ENCODE measurements at regions of chr13 and their contacts with region 1.

Region 1: DNA sequence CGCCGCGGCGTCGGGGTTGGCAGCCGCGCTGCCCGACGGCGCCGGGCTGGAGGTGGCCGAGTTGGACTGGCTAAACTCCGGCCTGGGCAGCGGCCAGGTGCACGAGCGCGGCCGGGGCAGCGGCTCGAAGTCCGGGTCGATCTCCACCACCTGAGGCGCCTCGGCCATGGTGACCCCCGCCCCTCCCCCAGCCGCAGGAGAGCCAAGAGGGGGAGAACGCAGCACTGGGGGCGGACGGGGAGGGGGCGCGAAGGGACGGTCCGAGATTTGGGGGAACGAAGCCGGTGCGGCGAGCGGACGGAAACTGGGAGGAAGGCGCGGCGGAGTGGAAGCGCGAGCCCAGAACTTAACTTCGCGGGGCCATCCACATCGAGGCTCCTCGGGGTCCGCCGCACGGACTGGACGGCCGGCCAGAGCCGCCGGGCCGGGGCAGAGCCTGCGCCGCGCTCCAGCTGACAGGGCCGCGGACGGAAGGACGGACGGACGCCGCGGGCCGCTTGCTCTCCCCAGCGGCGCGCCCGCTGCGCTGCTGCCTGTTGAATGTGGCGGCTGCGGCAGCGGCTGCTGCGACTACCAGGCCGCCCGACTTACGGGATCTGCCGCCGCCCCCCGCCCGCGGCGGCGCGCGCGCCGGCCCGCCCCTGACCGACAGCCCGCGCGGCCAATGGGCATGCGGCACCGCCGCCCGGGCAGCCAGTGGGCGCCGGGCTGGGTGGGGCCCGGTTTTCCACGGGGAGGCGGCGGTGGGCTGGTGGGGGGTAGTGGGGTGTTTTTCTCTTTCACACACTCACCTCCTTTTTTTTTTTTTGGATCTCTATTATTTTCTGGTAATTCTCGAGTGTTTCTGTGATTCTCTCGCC is at the start of gene FOXO1:
- DNase-seq: peak; percentile 93
- H3K4me3 ChIP-seq: peak within 1 kb of the TSS; percentile 91
- H3K27ac ChIP-seq: peak within 1 kb of the TSS; percentile 83
- H3K4me1 ChIP-seq: peaks cover 39% of the 10 kb centered on the region
- CTCF ChIP-seq: no peak
- total RNA-seq, gene FOXO1: 24.0 and 29.2 TPM in 2 replicates

Region 2: DNA sequence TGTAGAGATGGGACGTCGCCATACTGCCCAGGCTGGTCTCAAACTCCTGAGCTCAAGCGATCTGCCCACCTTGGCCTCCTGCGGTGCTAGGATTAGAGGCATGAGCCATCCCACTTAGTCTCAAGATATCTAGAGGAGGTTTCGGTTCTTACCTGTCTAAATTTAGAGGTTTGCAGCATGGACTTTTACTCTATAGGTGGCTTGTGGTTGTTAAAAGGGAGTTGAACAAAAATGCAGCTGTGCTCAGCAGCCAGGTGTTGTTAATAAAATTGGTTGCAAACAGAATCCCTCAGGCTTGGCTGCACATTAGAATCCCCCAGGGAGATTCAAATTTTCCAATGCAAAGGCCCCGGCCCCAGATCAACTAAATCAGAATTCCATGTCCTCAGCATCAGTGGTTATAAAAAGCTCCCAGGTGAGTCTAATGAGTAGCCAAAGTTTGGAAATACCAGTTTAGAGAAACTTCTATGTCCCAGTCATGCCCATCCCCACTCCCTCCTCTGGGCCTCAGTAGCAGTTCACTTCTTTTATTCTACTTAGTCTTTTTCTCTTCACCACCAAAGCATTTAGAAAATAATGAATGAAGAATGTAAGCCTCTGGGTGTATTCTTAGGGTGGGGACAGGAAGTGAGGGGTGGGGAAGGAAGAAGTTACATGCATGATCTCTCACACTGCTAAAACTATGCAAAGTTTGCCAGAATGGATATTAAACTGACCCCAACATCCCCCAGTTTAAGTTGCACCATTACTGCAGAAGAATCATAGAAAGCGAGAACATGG is 539.8 kb before region 1 on chr13:
- CTCF ChIA-PET with region 1: no interaction called
- POLR2A ChIA-PET with region 1: interaction called, 3 read pairs
- intact Hi-C with region 1: loop called (anchors 2 kb)
- DNase-seq: peak; percentile 97
- H3K4me3 ChIP-seq: peak overlapping the region; percentile 47
- H3K27ac ChIP-seq: peak overlapping the region; percentile 96
- H3K4me1 ChIP-seq: peaks cover 76% of the 10 kb centered on the region
- CTCF ChIP-seq: no peak

Region 3: GRCh38 chr13:40388617-40389016 is 277.7 kb before region 1 on chr13:
- CTCF ChIA-PET with region 1: no interaction called
- POLR2A ChIA-PET with region 1: interaction called, 4 read pairs
- intact Hi-C with region 1: loop called (anchors 1 kb)
- DNase-seq: peak; percentile 96
- H3K4me3 ChIP-seq: peak overlapping the region; percentile 66
- H3K27ac ChIP-seq: peak overlapping the region; percentile 67
- H3K4me1 ChIP-seq: peaks cover 44% of the 10 kb centered on the region
- CTCF ChIP-seq: no peak

Region 4: DNA sequence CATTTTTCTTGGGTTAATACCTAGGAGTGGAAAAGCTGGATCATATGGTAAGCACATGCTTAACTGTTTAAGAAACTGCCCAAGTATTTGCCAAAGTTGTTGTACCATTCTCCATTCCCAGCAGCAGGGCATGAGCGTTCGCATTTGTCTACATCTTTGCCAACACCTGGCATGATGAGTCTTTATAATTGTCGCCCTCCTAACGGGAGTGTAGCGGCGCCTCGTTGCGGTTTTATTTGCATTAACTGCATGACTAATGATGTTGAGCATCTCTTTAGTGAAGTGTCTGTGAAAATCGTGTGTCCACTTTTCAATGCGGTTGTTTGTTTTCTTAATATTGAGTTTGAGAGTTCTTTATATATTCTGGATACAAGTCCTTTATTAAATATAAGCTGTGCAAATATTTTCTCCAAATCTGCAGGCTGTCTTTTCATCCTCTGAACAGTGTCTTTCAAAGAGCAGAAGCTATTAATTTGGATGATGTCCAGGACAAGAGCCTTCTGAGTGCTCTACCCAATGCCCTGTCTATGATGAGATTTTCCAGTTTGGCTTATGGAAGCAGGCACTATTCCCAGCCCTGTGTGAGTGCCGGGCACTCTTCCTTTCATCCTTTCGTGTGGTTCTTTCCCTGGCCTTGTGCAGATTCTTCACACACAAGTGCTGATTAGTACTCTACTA is 201.8 kb before region 1 on chr13:
- CTCF ChIA-PET with region 1: interaction called, 12 read pairs
- POLR2A ChIA-PET with region 1: interaction called, 4 read pairs
- intact Hi-C with region 1: no loop called
- DNase-seq: peak; percentile 80
- H3K4me3 ChIP-seq: peak overlapping the region; percentile 42
- H3K27ac ChIP-seq: peak overlapping the region; percentile 26
- H3K4me1 ChIP-seq: peaks cover 43% of the 10 kb centered on the region
- CTCF ChIP-seq: no peak

Region 5: GRCh38 chr13:40589285-40590109 is 76.8 kb before region 1 on chr13:
- CTCF ChIA-PET with region 1: no interaction called
- POLR2A ChIA-PET with region 1: interaction called, 4 read pairs
- intact Hi-C with region 1: loop called (anchors 2 kb)
- DNase-seq: peak; percentile 97
- H3K4me3 ChIP-seq: peak overlapping the region; percentile 63
- H3K27ac ChIP-seq: peak overlapping the region; percentile 92
- H3K4me1 ChIP-seq: peaks cover 97% of the 10 kb centered on the region
- CTCF ChIP-seq: no peak

Region 6: DNA sequence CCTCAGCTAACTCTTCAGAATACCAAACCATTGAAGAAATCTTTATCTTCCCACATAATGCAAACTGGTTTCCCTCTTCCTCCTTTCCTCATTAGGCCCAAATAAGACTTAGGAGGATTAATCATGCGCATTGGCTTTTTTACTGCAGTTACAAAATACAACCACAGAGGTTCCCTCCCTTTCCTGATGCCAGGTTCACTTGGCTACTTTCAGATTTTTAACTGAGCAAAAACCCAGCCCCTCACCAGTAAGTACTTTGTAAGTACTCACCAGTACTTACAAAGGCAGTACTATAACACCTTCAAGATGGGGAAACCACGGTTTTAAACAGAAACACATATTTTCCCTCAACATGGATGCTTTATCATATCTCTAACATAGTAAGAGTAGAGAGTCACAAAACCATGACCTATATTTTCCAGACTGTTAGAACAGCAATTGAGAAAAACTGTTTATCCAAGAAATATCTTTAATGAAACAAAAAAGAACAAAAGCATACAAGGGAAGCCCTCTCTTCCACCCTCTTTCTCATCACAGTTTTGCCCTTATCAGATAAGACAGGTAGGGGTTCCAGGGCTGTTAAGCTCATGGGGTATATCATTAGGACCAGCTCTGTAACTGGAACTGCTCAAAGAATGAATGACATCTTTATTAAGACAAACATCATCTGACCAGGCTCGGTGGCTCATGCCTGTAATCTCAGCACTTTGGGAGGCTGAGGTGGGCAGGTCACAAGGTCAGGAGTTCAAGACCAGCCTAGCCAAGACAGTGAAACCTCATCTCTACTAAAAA is 12.6 kb before region 1 on chr13:
- CTCF ChIA-PET with region 1: interaction called, 5 read pairs
- POLR2A ChIA-PET with region 1: interaction called, 21 read pairs
- intact Hi-C with region 1: loop called (anchors 1 kb)
- DNase-seq: peak; percentile 58
- H3K4me3 ChIP-seq: peak overlapping the region; percentile 64
- H3K27ac ChIP-seq: peak overlapping the region; percentile 96
- H3K4me1 ChIP-seq: peaks cover 95% of the 10 kb centered on the region
- CTCF ChIP-seq: no peak; the same call in 1 of the 2 replicates

Region 7: DNA sequence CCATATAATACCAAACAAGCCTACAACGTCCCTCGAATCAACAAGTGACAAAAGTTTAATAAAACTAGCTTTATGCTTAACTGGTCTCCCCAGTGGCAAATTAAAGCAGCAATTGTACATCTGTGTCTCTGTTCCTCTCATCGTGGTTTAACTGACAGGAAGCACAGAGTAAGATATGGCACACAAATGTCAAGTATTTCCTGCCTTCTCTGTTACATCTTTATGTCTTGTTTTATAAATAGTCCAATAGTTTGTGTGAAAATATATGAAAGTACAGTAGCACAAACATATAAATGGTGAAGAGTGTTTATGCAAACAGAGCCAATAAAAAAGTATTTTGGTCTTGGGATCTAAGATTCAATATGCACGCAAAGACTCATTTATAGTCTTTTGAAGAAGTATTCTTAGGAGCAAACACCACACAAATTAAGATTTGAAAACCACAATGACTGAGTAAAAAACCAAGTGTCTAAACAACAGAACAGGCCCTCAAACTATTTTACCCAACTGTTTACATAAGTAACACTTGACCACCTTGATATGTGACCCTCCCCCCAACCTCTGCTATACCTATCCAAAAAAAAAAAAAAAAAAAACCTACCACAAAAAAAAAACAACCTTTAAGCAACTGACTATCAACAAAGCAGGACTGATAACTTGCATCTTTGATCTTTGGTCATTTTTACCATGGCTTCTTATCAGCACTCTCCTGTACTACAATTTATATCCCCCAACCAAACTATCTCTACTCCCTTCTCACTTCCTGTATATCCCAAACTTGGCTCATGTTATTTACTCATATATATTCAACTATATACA is 338.8 kb after region 1 on chr13:
- CTCF ChIA-PET with region 1: no interaction called
- POLR2A ChIA-PET with region 1: interaction called, 4 read pairs
- intact Hi-C with region 1: loop called (anchors 5 kb)
- DNase-seq: peak; percentile 89
- H3K4me3 ChIP-seq: peak overlapping the region; percentile 64
- H3K27ac ChIP-seq: peak overlapping the region; percentile 99
- H3K4me1 ChIP-seq: peaks cover 95% of the 10 kb centered on the region
- CTCF ChIP-seq: no peak

Region 8: DNA sequence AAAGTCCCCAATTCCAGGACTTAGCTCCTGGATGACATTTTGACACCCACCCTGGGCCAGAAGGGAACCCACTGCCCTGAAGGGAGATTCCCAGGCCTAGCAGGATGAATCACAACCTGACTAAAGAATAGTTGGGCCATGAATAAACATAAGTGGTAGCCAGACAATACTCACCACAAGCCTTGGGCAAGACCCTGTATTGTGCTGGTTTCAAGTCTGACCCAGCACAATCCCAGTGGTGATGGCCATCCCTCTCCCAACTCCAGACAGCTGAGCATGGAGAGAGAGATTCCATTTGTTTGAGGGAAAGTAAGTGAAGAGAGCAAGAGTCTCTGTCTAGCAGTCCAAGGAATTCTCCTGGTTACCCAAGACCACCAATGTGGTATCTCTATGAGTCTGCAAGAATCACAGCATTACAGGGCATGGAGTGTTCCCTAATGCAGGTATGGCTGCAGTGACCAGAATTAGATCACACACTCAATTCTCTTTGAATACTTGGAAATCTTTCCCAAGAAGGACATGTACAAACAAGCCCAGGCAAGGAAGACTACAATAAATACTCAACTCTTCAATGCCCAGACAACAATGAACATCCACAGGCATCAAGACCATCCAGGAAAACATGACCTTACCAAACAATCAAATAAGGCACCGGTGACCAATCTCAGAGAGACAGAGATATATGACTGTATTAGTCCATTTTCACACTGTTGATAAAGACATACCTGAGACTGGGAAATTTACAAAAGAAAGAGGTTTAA is 1136.6 kb after region 1 on chr13:
- CTCF ChIA-PET with region 1: no interaction called
- POLR2A ChIA-PET with region 1: no interaction called
- intact Hi-C with region 1: no loop called
- DNase-seq: no peak
- H3K4me3 ChIP-seq: no peak overlapping the region
- H3K27ac ChIP-seq: no peak overlapping the region
- H3K4me1 ChIP-seq: no peaks in the 10 kb centered on the region
- CTCF ChIP-seq: no peak